ENCODE measurements at regions of chr12 and their contacts with region 1.

Region 1: GRCh38 chr12:119841433-119842210 is 35.5 kb downstream of the CIT start:
- DNase-seq: no peak
- ATAC-seq: no peak
- H3K4me3 Mint-ChIP-seq: no peak overlapping the region
- H3K27ac Mint-ChIP-seq: no peak overlapping the region
- H3K4me1 Mint-ChIP-seq: no peaks in the 10 kb centered on the region
- H3K27me3 Mint-ChIP-seq: no peaks in the 10 kb centered on the region
- CTCF ChIP-seq: no peak

Region 2: DNA sequence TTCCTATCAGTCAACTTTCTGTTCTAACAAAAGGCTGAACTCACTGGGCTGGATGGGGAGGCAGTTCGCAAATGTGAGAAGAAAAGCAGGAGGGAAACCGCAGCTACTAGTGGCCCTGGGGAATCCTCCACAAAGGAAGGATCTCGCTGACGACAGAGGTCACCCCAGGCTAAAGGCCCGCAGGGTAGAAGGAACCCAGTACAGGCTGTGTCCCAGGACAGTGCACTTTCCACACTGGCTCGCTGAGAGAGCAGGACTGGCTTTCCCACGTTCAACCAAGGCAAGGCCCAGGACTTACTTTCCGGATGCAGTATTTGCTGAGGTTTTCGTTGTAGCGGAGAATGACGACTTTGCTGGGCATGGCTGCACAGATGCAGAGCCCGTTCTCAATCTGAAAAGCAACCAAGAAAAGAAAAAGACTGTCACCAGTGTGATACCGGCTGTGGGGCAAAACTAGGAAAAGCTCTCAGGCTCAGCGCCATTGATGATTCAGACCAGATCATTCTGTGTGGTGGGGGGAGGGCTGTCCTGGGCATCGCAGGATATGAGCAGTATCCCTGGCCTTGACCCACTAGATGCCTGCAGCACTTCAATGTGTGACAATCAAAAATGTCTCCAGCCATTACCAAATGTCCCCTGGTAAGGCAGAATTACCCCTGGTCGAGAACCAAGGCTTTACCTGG is 137.4 kb before region 1 on chr12:
- CTCF ChIA-PET with region 1: no interaction called
- POLR2A ChIA-PET with region 1: interaction called, 11 read pairs
- DNase-seq: no peak
- ATAC-seq: no peak
- H3K4me3 Mint-ChIP-seq: no peak overlapping the region
- H3K27ac Mint-ChIP-seq: no peak overlapping the region
- H3K4me1 Mint-ChIP-seq: peaks cover 7% of the 10 kb centered on the region
- H3K27me3 Mint-ChIP-seq: no peaks in the 10 kb centered on the region
- CTCF ChIP-seq: no peak